ENCODE measurements at regions of chr7 and their contacts with region 1.

Region 1: GRCh38 chr7:18666107-18666728 is 170.7 kb downstream of the HDAC9 start:
- DNase-seq: peak; percentile 85
- ATAC-seq: peak; percentile 98
- H3K4me3 ChIP-seq: no peak overlapping the region
- H3K4me3 Mint-ChIP-seq: no peak overlapping the region
- H3K27ac ChIP-seq: peak overlapping the region in 1 of 2 donors; percentile 54
- H3K27ac Mint-ChIP-seq: peak overlapping the region; percentile 2
- H3K4me1 ChIP-seq: peaks cover 0 to 17% of the 10 kb centered on the region in 2 donors
- H3K4me1 Mint-ChIP-seq: peaks cover 10% of the 10 kb centered on the region
- H3K27me3 ChIP-seq: no peaks in the 10 kb centered on the region
- H3K27me3 Mint-ChIP-seq: no peaks in the 10 kb centered on the region
- CTCF ChIP-seq: peak; percentile 99

Region 2: GRCh38 chr7:17680943-17681351 is 985.3 kb before region 1 on chr7:
- CTCF ChIA-PET with region 1: interaction called, 3 read pairs
- POLR2A ChIA-PET with region 1: no interaction called
- intact Hi-C with region 1: loop called (anchors 5 kb)
- DNase-seq: peak; percentile 41
- ATAC-seq: no peak
- H3K4me3 ChIP-seq: no peak overlapping the region
- H3K4me3 Mint-ChIP-seq: no peak overlapping the region
- H3K27ac ChIP-seq: no peak overlapping the region
- H3K27ac Mint-ChIP-seq: no peak overlapping the region
- H3K4me1 ChIP-seq: no peaks in the 10 kb centered on the region
- H3K4me1 Mint-ChIP-seq: no peaks in the 10 kb centered on the region
- H3K27me3 ChIP-seq: no peaks in the 10 kb centered on the region
- H3K27me3 Mint-ChIP-seq: no peaks in the 10 kb centered on the region
- CTCF ChIP-seq: peak; percentile 84

Region 3: GRCh38 chr7:18393465-18394118 is 272.6 kb before region 1 on chr7:
- CTCF ChIA-PET with region 1: interaction called, 3 read pairs
- POLR2A ChIA-PET with region 1: no interaction called
- intact Hi-C with region 1: loop called (anchors 1 kb)
- DNase-seq: no peak
- ATAC-seq: no peak
- H3K4me3 ChIP-seq: no peak overlapping the region
- H3K4me3 Mint-ChIP-seq: no peak overlapping the region
- H3K27ac ChIP-seq: no peak overlapping the region
- H3K27ac Mint-ChIP-seq: no peak overlapping the region
- H3K4me1 ChIP-seq: peaks cover 32% of the 10 kb centered on the region in 2 donors
- H3K4me1 Mint-ChIP-seq: peaks cover 43% of the 10 kb centered on the region
- H3K27me3 ChIP-seq: no peaks in the 10 kb centered on the region
- H3K27me3 Mint-ChIP-seq: no peaks in the 10 kb centered on the region
- CTCF ChIP-seq: no peak

Region 4: DNA sequence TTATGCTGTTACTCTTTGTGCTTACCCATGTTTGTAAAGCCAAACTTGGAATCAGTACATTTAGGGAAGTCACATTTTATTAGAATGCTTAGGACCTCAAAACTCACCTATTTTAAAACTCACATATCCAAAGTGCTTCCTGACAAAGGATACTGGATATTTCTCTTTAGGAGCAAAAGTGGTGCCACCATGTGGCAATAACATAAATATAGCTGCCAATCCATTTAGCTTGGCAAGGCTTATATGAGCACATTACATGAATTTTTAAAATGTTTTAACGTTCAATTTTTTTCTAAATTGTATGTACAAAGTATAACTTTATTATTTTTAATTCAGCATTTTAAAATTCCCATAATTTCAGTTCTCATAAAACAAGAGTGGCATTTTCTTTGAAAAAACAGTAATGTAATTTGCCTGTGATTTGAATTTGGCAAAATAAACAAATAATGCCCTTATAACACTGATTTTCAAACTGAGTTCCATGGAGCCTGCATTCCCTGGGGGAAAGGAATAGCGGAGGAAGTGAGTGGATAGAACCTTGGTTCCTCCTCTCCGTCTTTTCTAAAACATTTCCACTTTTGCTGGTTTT is 95.2 kb before region 1 on chr7:
- CTCF ChIA-PET with region 1: interaction called, 7 read pairs
- POLR2A ChIA-PET with region 1: no interaction called
- intact Hi-C with region 1: loop called (anchors 5 kb)
- DNase-seq: no peak
- ATAC-seq: no peak
- H3K4me3 ChIP-seq: no peak overlapping the region
- H3K4me3 Mint-ChIP-seq: no peak overlapping the region
- H3K27ac ChIP-seq: peak overlapping the region in 1 of 2 donors; percentile 44
- H3K27ac Mint-ChIP-seq: peak overlapping the region; percentile 20
- H3K4me1 ChIP-seq: peaks cover 45 to 56% of the 10 kb centered on the region in 2 donors
- H3K4me1 Mint-ChIP-seq: peaks cover 62% of the 10 kb centered on the region
- H3K27me3 ChIP-seq: no peaks in the 10 kb centered on the region
- H3K27me3 Mint-ChIP-seq: no peaks in the 10 kb centered on the region
- CTCF ChIP-seq: no peak

Region 5: GRCh38 chr7:18623389-18623788 is 42.8 kb before region 1 on chr7:
- CTCF ChIA-PET with region 1: interaction called, 4 read pairs
- POLR2A ChIA-PET with region 1: no interaction called
- intact Hi-C with region 1: loop called (anchors 5 kb)
- DNase-seq: no peak
- ATAC-seq: no peak
- H3K4me3 ChIP-seq: no peak overlapping the region
- H3K4me3 Mint-ChIP-seq: no peak overlapping the region
- H3K27ac ChIP-seq: no peak overlapping the region
- H3K27ac Mint-ChIP-seq: no peak overlapping the region
- H3K4me1 ChIP-seq: no peaks in the 10 kb centered on the region
- H3K4me1 Mint-ChIP-seq: no peaks in the 10 kb centered on the region
- H3K27me3 ChIP-seq: no peaks in the 10 kb centered on the region
- H3K27me3 Mint-ChIP-seq: no peaks in the 10 kb centered on the region
- CTCF ChIP-seq: no peak

Region 6: DNA sequence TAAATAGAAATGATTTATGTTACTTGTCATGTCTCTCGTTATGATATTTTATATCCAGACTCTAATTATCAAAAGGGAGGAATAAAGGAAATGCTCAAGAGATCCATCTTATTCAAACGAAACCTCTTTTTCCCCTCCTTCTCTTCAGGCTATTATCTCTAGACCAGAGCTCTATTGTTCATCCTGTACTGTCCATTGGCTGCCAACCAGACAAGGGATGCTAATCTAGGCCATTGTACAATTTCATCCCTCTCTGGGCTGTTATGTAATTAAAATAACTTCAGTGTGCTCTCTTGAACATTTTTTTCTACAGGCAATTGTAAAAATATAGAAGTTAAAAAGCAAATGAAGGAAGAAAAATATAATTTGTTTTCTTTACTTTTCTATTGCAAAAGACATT is 49.8 kb after region 1 on chr7:
- CTCF ChIA-PET with region 1: no interaction called
- POLR2A ChIA-PET with region 1: no interaction called
- intact Hi-C with region 1: no loop called
- DNase-seq: no peak
- ATAC-seq: no peak
- H3K4me3 ChIP-seq: no peak overlapping the region
- H3K4me3 Mint-ChIP-seq: no peak overlapping the region
- H3K27ac ChIP-seq: no peak overlapping the region
- H3K27ac Mint-ChIP-seq: no peak overlapping the region
- H3K4me1 ChIP-seq: no peaks in the 10 kb centered on the region
- H3K4me1 Mint-ChIP-seq: no peaks in the 10 kb centered on the region
- H3K27me3 ChIP-seq: no peaks in the 10 kb centered on the region
- H3K27me3 Mint-ChIP-seq: no peaks in the 10 kb centered on the region
- CTCF ChIP-seq: no peak

Region 7: DNA sequence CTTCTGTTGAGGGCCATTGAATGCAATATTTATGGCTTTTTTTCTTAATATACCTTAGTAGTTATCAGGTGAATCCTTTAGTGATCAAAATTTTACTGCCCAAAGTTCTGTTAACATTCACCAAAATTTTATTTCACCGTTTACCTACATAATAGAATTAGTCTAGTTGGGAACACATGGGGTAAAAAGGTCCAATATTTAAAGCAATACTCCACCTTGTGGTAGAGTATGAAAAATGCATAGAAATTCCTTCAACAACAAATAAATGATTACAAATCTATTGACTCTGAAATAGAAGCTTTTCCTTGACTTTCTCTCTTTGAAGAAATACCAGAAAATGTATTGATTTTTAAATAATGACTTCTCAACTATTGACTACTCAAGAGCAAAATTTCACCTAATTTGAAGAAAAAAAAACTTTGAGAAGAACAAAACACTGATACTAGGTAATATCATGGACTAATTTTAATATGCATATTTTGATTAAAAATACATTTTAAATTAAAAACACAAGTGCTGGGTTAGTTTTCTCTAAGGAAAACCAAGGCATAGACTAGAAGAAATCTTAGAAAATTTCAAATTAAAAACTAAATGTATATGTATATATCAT is 999.3 kb after region 1 on chr7:
- CTCF ChIA-PET with region 1: interaction called, 4 read pairs
- POLR2A ChIA-PET with region 1: no interaction called
- intact Hi-C with region 1: loop called (anchors 1 kb)
- DNase-seq: peak; percentile 54
- ATAC-seq: peak; percentile 57
- H3K4me3 ChIP-seq: no peak overlapping the region
- H3K4me3 Mint-ChIP-seq: peak overlapping the region; percentile 27
- H3K27ac ChIP-seq: no peak overlapping the region
- H3K27ac Mint-ChIP-seq: no peak overlapping the region
- H3K4me1 ChIP-seq: peaks cover 9 to 17% of the 10 kb centered on the region in 2 donors
- H3K4me1 Mint-ChIP-seq: peaks cover 16% of the 10 kb centered on the region
- H3K27me3 ChIP-seq: no peaks in the 10 kb centered on the region
- H3K27me3 Mint-ChIP-seq: no peaks in the 10 kb centered on the region
- CTCF ChIP-seq: peak; percentile 85